GM10248 (cell line): ENCODE measurements at regions of chr15 and their contacts with region 1.

Region 1: DNA sequence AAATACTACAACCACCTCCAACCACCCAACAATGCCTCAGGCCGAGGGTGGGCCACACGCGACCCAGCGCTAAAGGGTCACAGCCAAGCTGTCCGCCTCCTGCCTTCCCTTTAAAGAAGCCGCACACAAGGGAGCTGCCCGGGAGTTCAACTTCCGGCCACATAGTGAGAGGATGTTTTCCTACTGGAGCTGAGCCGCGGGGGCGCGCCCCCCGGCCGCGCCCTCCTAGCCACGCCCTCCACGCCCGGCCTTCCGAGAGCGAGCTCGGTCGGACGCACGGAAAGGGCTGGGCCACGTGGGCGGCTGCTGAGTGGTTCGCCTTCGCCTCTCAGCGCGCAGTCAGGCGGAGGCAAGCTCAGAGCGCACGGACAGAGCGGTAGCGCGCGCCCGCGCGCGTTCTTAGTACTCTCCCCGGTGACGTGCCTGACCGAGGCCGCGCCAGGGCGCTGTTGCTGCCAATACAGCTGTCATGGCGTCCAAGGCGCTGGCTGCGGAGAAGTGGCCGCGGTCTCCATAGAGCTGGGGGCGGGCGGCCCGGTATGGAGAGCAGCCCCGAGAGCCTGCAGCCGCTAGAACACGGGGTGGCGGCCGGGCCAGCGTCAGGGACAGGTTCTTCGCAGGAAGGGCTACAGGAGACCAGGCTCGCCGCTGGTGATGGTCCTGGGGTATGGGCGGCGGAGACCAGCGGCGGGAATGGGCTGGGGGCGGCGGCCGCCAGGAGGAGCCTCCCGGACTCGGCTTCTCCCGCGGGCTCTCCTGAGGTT is at the start of gene MINDY2:
- DNase-seq: peak; percentile 96
- CTCF ChIP-seq: peak; percentile 42

Region 2: DNA sequence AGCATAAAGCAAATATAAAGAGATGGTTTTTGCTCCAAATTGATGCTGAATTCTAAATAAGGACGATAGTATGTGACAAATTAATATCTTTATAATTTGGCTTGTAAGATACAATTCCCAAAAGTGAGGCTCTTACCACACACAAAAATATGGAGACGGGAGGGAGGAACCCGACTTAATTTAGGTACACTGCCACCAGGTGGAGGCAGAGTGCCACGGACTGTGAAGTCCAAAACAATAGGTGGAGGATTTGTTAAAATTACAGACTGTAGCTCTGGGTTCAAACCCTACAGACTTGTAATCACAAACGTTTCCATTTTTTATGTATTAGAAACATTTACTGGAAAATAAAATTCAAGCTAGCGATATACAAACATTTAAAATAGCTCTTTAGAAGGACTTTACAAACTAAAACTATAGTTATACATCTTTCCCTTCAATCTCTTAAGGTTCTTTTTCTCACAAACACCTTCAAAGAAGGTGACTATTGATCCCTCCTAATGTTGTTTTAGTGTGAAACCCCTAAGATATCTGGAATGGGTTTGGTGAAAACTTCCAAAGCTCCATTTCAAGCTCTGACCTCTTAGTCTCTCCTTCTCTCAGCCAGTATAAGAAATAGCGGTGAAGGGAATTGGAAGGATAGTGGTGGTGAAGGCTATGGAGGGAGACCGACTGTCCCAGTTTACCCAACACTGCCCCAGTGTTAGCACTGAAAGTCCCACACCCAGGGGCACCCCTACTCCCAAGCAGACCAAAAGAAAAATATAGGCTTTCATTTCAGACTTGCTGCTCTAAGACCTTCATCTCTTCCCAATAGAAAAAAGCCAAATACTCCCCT is 543.1 kb before region 1 on chr15:
- CTCF ChIA-PET with region 1: interaction called, 17 read pairs
- POLR2A ChIA-PET with region 1: interaction called, 3 read pairs
- DNase-seq: peak; percentile 64
- CTCF ChIP-seq: peak; percentile 78

Region 3: GRCh38 chr15:58749532-58750337 is 21.3 kb before region 1 on chr15 and contains the start of gene ADAM10:
- CTCF ChIA-PET with region 1: interaction called, 14 read pairs
- POLR2A ChIA-PET with region 1: interaction called, 23 read pairs
- DNase-seq: peak; percentile 100
- CTCF ChIP-seq: no peak

Region 4: DNA sequence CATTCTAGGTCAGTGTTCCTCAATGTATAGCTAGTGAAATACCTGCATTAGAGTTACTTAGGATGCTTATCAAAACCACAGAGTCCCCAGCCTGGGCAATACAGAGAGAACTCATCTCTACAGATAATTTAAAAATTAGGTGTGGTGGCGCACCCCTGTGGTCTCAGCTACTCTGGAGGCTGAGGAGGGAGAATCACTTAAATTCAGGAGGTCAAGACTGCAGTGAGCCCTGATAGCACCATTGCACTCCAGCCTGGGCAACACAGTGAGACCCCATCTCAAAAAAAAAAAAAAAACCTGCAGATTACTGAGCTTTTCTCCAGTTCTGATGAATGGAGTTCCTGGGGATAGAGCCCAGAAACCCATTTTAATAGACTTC is 10.0 kb before region 1 on chr15:
- CTCF ChIA-PET with region 1: interaction called, 15 read pairs
- POLR2A ChIA-PET with region 1: interaction called, 3 read pairs
- DNase-seq: no peak
- CTCF ChIP-seq: peak; percentile 4

Region 5: GRCh38 chr15:58785355-58785754 is 14.3 kb after region 1 on chr15:
- CTCF ChIA-PET with region 1: interaction called, 10 read pairs
- POLR2A ChIA-PET with region 1: no interaction called
- DNase-seq: no peak
- CTCF ChIP-seq: no peak

Region 6: GRCh38 chr15:58864602-58865424 is 93.8 kb after region 1 on chr15:
- CTCF ChIA-PET with region 1: no interaction called
- POLR2A ChIA-PET with region 1: no interaction called
- DNase-seq: peak; percentile 28
- CTCF ChIP-seq: no peak